OCI-LY7 (cell line): ENCODE measurements at regions of chr17 and their contacts with region 1.

Region 1: DNA sequence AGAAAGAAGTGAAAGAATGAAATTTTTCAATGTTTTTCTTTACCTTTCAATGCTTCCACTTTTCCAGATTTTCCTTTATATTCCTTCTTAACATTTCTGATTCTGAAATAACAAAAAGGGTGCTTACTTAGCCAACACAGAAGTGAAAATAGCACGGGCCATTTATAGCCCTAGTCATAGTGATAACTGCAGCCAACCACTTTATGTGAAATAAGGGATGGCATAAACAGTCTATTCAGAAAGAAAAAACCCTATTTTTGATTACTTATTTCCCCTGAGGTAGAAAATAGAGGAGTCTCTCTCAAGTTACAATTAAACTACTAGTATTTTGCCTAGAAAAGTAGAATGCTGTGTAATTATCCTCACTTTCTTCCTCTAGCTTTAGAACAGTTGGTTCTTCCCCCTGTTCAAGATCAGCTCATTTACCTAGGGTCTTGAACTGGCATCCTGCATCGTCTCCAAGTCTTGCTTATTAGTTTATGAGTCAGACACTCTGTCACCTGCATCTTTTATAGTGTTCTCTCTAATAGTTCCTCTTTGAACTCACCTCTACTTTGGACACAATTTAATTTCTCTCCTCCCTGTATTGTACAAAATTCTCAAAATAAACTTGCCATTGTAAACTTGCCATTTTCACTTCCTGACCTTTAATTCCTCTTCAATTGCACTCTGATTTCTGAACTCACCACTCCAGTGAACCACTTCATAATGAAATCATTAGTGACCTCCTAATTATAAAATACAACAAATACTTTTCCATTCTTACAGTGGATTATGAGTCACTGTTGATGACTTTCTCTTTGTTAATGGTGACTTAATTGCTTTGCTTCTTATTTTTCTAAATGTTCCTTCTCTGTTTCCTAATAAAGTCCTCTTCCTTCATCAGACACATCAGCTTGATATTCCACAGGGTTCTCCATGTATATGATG is 23.6 kb downstream of the ABCA6 start:
- DNase-seq: peak; percentile 85
- H3K4me3 ChIP-seq: peak overlapping the region; percentile 62
- H3K27ac ChIP-seq: peak overlapping the region; percentile 92
- H3K4me1 ChIP-seq: peaks cover 61% of the 10 kb centered on the region
- CTCF ChIP-seq: no peak

Region 2: DNA sequence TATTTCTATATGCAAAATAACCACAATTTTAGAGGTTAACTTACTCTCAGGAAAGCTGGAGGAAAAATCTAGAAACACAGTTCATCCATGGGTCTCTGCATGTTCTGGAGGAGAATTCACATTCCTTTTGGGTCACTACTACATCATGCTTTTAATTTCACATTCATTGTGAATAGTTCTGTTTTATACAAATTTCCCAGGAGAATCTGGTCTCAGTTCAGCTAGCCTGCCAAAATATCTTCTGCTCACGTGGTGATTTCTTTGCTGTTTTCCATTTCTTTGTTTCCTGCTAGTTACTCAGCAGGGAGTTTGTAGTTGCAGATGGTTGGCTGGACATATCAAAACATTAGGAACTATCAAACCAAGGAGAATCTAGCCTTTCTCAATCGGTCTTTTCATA is 57.3 kb before region 1 on chr17 and contains the start of gene ABCA9:
- CTCF ChIA-PET with region 1: no interaction called
- POLR2A ChIA-PET with region 1: no interaction called
- intact Hi-C with region 1: loop called (anchors 5 kb)
- DNase-seq: no peak
- H3K4me3 ChIP-seq: peak within 1 kb of the TSS; percentile 20
- H3K27ac ChIP-seq: no peak within 1 kb of the TSS
- H3K4me1 ChIP-seq: peaks cover 28% of the 10 kb centered on the region
- CTCF ChIP-seq: no peak
- total RNA-seq, gene ABCA9: 0.47 and 0.88 TPM in 2 replicates

Region 3: GRCh38 chr17:69130627-69131296 is 12.6 kb after region 1 on chr17:
- CTCF ChIA-PET with region 1: no interaction called
- POLR2A ChIA-PET with region 1: interaction called, 12 read pairs
- intact Hi-C with region 1: no loop called
- DNase-seq: no peak
- H3K4me3 ChIP-seq: no peak overlapping the region
- H3K27ac ChIP-seq: no peak overlapping the region
- H3K4me1 ChIP-seq: peaks cover 7% of the 10 kb centered on the region
- CTCF ChIP-seq: no peak